ENCODE measurements at regions of chr1 and their contacts with region 1.

Region 1: GRCh38 chr1:226814751-226815496 is 55.5 kb upstream of the PSEN2 start:
- DNase-seq: peak; percentile 96
- H3K4me3 ChIP-seq: no peak overlapping the region
- H3K27ac ChIP-seq: peak overlapping the region; percentile 95
- H3K4me1 ChIP-seq: peaks cover 46% of the 10 kb centered on the region
- H3K27me3 ChIP-seq: no peaks in the 10 kb centered on the region
- CTCF ChIP-seq: no peak
- POLR2A ChIP-seq: no peak

Region 2: GRCh38 chr1:226778657-226779058 is 36.3 kb before region 1 on chr1:
- CTCF ChIA-PET with region 1: interaction called, 4 read pairs
- POLR2A ChIA-PET with region 1: no interaction called
- dilution Hi-C with region 1: no loop called
- intact Hi-C with region 1: loop called (anchors 1 kb)
- DNase-seq: peak; percentile 96
- H3K4me3 ChIP-seq: no peak overlapping the region
- H3K27ac ChIP-seq: peak overlapping the region; percentile 0
- H3K4me1 ChIP-seq: peaks cover 8% of the 10 kb centered on the region
- H3K27me3 ChIP-seq: no peaks in the 10 kb centered on the region
- CTCF ChIP-seq: no peak
- POLR2A ChIP-seq: no peak

Region 3: GRCh38 chr1:226798427-226799411 is 16.2 kb before region 1 on chr1:
- CTCF ChIA-PET with region 1: interaction called, 7 read pairs
- POLR2A ChIA-PET with region 1: interaction called, 4 read pairs
- dilution Hi-C with region 1: no loop called
- intact Hi-C with region 1: loop called (anchors 1 kb)
- DNase-seq: peak; percentile 36
- H3K4me3 ChIP-seq: no peak overlapping the region
- H3K27ac ChIP-seq: no peak overlapping the region
- H3K4me1 ChIP-seq: peaks cover 15% of the 10 kb centered on the region
- H3K27me3 ChIP-seq: no peaks in the 10 kb centered on the region
- CTCF ChIP-seq: no peak
- POLR2A ChIP-seq: no peak